Gastrocnemius medialis (tissue), 4 donors: ENCODE measurements at regions of chr6 and their contacts with region 1.

Region 1: GRCh38 chr6:36780442-36781177 is 58.6 kb downstream of the CPNE5 start:
- DNase-seq: no peak
- ATAC-seq: no peak
- H3K4me3 ChIP-seq: no peak overlapping the region
- H3K27ac ChIP-seq: no peak overlapping the region
- H3K4me1 ChIP-seq: no peaks in the 10 kb centered on the region
- H3K27me3 ChIP-seq: peaks cover 0 to 3% (median 0%) of the 10 kb centered on the region in 3 donors
- CTCF ChIP-seq: no peak
- POLR2A ChIP-seq: no peak

Region 2: DNA sequence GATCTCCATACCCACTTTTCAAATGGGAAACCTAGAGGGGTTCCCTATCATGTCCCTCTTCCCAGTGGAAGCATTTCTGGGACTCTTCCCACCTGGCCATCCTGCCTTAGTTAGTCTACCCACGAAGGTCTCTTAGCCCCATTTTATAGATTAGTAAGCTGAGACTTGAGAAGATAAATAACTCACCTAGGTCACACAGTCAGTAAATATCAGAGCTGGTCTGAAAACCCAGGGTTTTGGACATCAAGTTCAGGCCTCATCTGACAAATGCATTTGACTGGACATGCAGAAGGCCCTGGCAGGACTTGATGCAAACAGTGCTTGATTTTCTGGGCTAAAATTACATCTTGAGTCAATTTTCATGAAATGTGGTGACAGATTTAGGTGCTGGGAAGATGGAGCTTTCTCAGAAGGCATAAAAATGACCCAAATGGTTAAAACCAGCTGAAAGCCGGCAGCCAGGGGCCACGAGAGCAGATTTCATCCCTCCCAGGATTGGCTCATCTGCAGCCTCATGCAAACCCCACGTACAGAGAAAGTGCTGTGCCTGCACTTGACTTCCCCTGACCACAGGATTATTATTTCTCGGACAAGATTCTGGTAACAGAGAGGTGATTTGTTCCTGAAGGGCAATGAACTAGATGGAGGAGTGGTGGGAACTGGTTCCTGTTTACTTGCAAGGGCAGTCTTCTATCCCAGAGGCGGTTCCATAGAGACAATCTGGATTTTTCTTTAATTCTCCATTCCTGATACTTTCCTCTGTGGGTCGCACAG is 35.5 kb after region 1 on chr6:
- in situ Hi-C with region 1: no loop called
- intact Hi-C with region 1: loop called (anchors 5 kb)
- DNase-seq: no peak
- ATAC-seq: no peak
- H3K4me3 ChIP-seq: no peak overlapping the region
- H3K27ac ChIP-seq: no peak overlapping the region
- H3K4me1 ChIP-seq: no peaks in the 10 kb centered on the region
- H3K27me3 ChIP-seq: no peaks in the 10 kb centered on the region
- CTCF ChIP-seq: no peak
- POLR2A ChIP-seq: no peak